WTC11 (cell line): ENCODE measurements at regions of chr17 and their contacts with region 1.

Region 1: DNA sequence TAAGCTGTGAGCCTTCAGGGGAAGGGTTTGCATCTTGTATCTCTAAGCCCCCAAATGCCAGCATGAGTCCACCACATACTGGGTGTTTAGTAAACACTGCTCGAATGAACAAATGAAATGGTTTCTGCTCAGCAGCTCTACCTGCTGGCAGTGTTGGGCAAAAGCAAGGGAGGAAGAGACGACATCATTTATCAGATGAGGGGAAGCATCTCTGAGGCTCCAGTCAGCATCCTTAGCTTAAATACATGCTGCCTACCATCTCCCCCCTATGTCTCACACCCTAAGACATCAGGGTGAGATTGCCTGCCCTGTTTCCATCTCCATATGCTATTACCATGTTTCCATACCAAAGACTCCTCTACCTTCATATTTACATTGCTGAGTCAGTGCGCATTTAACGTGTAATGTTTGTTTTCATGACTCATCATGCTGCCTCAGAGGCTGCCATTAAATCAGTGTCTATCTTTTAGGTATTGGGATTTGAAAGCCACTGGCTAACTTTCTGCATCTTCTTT is 379.8 kb downstream of the UTP18 start:
- DNase-seq: peak; percentile 42
- ATAC-seq: peak; percentile 89
- H3K4me3 Mint-ChIP-seq: no peak overlapping the region
- H3K27ac Mint-ChIP-seq: no peak overlapping the region
- H3K4me1 Mint-ChIP-seq: peaks cover 24% of the 10 kb centered on the region
- H3K27me3 Mint-ChIP-seq: no peaks in the 10 kb centered on the region
- CTCF ChIP-seq: no peak

Region 2: DNA sequence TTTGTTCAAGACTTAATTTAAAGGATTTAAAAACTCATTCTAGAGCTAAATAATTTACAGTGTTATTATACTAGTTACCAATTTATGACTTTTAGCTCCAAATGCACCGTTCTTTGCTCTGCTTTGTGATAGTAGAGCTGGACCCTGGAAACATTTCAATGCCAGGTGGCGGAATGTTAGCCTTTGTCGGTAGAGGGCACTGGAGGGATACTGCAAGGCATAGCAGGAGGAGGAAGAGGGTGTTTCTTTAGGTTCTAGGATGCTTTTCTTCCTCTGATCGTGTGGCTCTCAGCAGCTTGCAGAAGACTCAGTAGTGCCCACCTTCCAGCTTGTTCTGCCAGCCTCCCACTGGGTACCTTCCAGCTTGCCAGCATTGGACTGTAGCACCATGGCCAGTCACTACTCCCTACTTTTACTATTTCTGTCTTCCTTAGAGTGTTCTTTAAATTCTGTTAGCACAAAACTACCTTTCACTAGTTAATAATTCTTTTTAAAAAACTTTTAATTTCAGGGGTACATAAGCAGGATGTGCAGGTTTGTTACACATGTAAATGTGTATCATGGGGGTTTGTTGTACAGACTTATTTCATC is 54.6 kb before region 1 on chr17:
- CTCF ChIA-PET with region 1: interaction called, 16 read pairs
- POLR2A ChIA-PET with region 1: no interaction called
- DNase-seq: peak; percentile 55
- ATAC-seq: peak; percentile 93
- H3K4me3 Mint-ChIP-seq: no peak overlapping the region
- H3K27ac Mint-ChIP-seq: no peak overlapping the region
- H3K4me1 Mint-ChIP-seq: no peaks in the 10 kb centered on the region
- H3K27me3 Mint-ChIP-seq: no peaks in the 10 kb centered on the region
- CTCF ChIP-seq: peak; percentile 22; the same call in 1 of the 2 replicates

Region 3: GRCh38 chr17:51653878-51654277 is 13.7 kb after region 1 on chr17:
- CTCF ChIA-PET with region 1: interaction called, 13 read pairs
- POLR2A ChIA-PET with region 1: no interaction called
- DNase-seq: peak; percentile 24
- ATAC-seq: peak; percentile 90
- H3K4me3 Mint-ChIP-seq: no peak overlapping the region
- H3K27ac Mint-ChIP-seq: no peak overlapping the region
- H3K4me1 Mint-ChIP-seq: no peaks in the 10 kb centered on the region
- H3K27me3 Mint-ChIP-seq: no peaks in the 10 kb centered on the region
- CTCF ChIP-seq: no peak

Region 4: GRCh38 chr17:51668155-51668962 is 28.2 kb after region 1 on chr17:
- CTCF ChIA-PET with region 1: no interaction called
- POLR2A ChIA-PET with region 1: no interaction called
- DNase-seq: no peak
- ATAC-seq: no peak
- H3K4me3 Mint-ChIP-seq: no peak overlapping the region
- H3K27ac Mint-ChIP-seq: no peak overlapping the region
- H3K4me1 Mint-ChIP-seq: no peaks in the 10 kb centered on the region
- H3K27me3 Mint-ChIP-seq: peaks cover 12% of the 10 kb centered on the region
- CTCF ChIP-seq: no peak